Psoas muscle (tissue), 8 donors: ENCODE measurements at regions of chr7 and their contacts with region 1.

Region 1: GRCh38 chr7:123865517-123866117 is 20.6 kb downstream of the HYAL4 start:
- DNase-seq: no peak
- ATAC-seq: peak; percentile 80 to 93 (median 86)
- H3K4me3 ChIP-seq: no peak overlapping the region
- H3K27ac ChIP-seq: no peak overlapping the region
- H3K4me1 ChIP-seq: no peaks in the 10 kb centered on the region
- H3K27me3 ChIP-seq: no peaks in the 10 kb centered on the region
- CTCF ChIP-seq: peak; percentile 85

Region 2: GRCh38 chr7:123494193-123494796 is 371.3 kb before region 1 on chr7:
- intact Hi-C with region 1: loop called in 1 of 2 experiments (anchors 5 kb)
- DNase-seq: no peak
- ATAC-seq: peak in 2 of 4 donors; percentile 58 to 74
- H3K4me3 ChIP-seq: no peak overlapping the region
- H3K27ac ChIP-seq: no peak overlapping the region
- H3K4me1 ChIP-seq: no peaks in the 10 kb centered on the region
- H3K27me3 ChIP-seq: no peaks in the 10 kb centered on the region
- CTCF ChIP-seq: peak; percentile 80

Region 3: DNA sequence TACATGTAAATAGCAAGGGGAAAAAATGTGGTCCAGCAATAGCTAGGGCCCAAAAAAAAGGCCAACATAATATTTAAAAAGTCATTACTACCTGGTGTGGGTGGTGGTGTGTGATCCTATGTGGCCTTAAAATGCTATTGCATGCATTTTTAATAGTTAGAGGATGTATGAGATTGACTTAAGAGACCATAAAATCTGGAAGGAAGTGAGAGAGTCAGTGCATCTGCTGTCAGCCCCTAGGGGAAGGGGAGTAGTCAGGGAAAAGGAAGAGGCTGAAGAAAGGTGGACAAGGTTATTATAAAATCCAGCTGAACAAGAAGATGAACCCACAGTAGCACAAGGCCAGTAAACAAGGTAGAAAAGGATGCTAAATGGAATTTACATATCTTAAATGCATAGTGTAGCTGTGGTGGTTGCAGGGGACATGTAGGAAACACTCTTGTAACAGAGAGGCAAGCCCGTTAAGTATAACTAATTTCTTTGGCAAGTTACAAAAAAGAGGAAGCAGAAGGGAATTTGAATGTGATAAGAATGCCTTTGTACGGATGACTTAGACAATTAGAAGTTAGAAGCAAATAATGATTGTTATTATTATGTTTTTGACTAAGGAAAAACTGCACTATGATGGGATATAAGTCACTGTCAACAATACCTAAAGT is 296.1 kb before region 1 on chr7:
- intact Hi-C with region 1: loop called in 1 of 2 experiments (anchors 10 kb)
- DNase-seq: no peak
- ATAC-seq: no peak
- H3K4me3 ChIP-seq: no peak overlapping the region
- H3K27ac ChIP-seq: no peak overlapping the region
- H3K4me1 ChIP-seq: no peaks in the 10 kb centered on the region
- H3K27me3 ChIP-seq: no peaks in the 10 kb centered on the region
- CTCF ChIP-seq: no peak

Region 4: GRCh38 chr7:123682690-123683089 is 182.9 kb before region 1 on chr7:
- intact Hi-C with region 1: loop called (anchors 2 to 5 kb)
- DNase-seq: no peak
- ATAC-seq: peak in 2 of 4 donors; percentile 42 to 54
- H3K4me3 ChIP-seq: no peak overlapping the region
- H3K27ac ChIP-seq: peak overlapping the region; percentile 81
- H3K4me1 ChIP-seq: peaks cover 47% of the 10 kb centered on the region
- H3K27me3 ChIP-seq: no peaks in the 10 kb centered on the region
- CTCF ChIP-seq: peak; percentile 54

Region 5: GRCh38 chr7:123797673-123798527 is 67.7 kb before region 1 on chr7:
- intact Hi-C with region 1: loop called (anchors 2 to 5 kb)
- DNase-seq: no peak
- ATAC-seq: peak; percentile 82 to 90 (median 86)
- H3K4me3 ChIP-seq: no peak overlapping the region
- H3K27ac ChIP-seq: peak overlapping the region; percentile 44
- H3K4me1 ChIP-seq: peaks cover 11% of the 10 kb centered on the region
- H3K27me3 ChIP-seq: no peaks in the 10 kb centered on the region
- CTCF ChIP-seq: peak; percentile 69

Region 6: GRCh38 chr7:123966936-123967335 is 101.3 kb after region 1 on chr7:
- intact Hi-C with region 1: no loop called
- DNase-seq: no peak
- ATAC-seq: no peak
- H3K4me3 ChIP-seq: no peak overlapping the region
- H3K27ac ChIP-seq: no peak overlapping the region
- H3K4me1 ChIP-seq: no peaks in the 10 kb centered on the region
- H3K27me3 ChIP-seq: no peaks in the 10 kb centered on the region
- CTCF ChIP-seq: no peak

Region 7: DNA sequence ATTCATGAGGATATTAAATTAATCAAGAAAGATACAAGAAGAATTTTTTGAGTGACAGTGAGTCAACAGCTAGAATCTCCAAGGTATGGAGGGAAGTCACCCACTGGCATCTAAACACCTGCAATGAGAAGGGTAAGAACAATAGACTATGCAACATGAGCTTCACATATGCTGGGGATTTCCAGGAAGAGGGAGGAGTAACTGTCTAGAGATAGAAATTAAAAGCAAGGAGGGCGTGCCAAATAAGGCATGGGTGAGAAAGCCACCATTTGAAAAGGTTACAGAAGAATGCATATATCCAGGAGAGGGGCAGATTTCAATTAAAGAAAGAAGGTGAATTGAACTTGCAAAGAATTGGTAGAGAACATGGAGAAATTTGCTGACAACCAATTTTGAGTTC is 534.3 kb after region 1 on chr7:
- intact Hi-C with region 1: no loop called
- DNase-seq: no peak
- ATAC-seq: no peak
- H3K4me3 ChIP-seq: no peak overlapping the region
- H3K27ac ChIP-seq: no peak overlapping the region
- H3K4me1 ChIP-seq: no peaks in the 10 kb centered on the region
- H3K27me3 ChIP-seq: no peaks in the 10 kb centered on the region
- CTCF ChIP-seq: no peak